Activated CD4-positive, alpha-beta T cell treated with anti-CD3 and anti-CD28 coated beads for 36 hours (primary cell): ENCODE measurements at regions of chr22 and their contacts with region 1.

Region 1: GRCh38 chr22:31211862-31212730 is at the start of gene LIMK2:
- DNase-seq: peak; percentile 99
- ATAC-seq: peak; percentile 97
- H3K4me3 Mint-ChIP-seq: peak within 1 kb of the TSS; percentile 85
- H3K27ac Mint-ChIP-seq: peak within 1 kb of the TSS; percentile 92
- H3K4me1 Mint-ChIP-seq: peaks cover 45% of the 10 kb centered on the region
- H3K27me3 Mint-ChIP-seq: no peaks in the 10 kb centered on the region
- total RNA-seq, gene LIMK2: 31.8 to 34.4 TPM

Region 2: DNA sequence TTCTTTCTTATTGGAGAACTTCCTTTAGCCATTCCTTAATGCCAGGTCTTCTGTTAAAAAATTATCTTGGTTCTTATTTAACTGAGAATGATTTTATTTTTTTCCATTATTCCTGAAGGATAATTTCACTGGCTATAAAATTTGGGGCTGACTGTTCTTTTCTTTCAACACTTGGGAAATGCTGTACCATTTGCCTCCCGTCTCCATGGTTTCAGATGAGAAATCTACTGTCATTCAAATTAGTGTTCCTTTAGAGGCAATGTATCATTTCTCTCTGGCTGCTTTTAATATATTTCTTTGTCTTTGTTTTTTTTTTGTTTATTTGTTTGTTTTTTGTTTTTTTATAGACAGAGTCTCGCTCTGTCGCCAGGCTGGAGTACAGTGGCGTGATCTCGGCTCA is 182.8 kb before region 1 on chr22:
- CTCF ChIA-PET with region 1: no interaction called
- POLR2A ChIA-PET with region 1: no interaction called
- intact Hi-C with region 1: no loop called
- DNase-seq: no peak
- ATAC-seq: no peak
- H3K4me3 Mint-ChIP-seq: no peak overlapping the region
- H3K27ac Mint-ChIP-seq: no peak overlapping the region
- H3K4me1 Mint-ChIP-seq: no peaks in the 10 kb centered on the region
- H3K27me3 Mint-ChIP-seq: no peaks in the 10 kb centered on the region

Region 3: DNA sequence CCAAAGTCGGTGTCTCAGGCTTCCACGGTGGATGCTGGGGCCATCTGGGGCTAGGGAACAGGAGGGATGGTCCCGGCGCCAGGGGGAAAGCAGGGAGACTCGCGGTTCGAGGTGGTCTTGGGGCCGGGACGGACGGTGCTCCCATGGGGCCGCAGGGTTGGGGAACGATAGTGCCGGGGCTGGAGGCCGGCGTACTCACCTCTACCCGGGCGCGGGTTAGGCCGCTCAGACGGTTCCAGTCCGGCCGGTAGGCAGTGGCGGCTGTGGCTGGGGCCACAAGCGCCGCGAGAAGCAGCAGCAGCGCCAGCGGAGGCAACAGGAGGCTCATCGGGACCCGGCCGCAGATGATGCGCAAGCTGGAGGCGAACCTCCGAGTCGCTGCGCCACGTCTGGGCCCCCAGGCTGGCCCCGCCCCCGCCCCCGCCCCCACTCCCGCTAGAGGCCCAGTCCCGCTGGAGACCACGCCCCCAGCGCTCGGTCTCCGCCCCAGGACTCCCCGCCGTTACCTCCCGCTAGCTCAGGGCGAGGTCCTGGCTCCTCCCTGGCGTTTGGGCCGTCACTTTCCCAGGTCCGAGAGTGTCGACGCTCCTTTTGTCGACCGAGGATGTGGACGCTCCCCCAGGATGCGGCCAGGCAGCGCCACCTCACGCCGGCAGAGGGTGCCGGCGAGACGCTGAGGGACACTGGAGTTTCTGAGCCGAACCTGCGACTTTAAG is 104.8 kb before region 1 on chr22 and contains the start of gene SELENOM:
- CTCF ChIA-PET with region 1: interaction called, 5 read pairs
- POLR2A ChIA-PET with region 1: no interaction called
- intact Hi-C with region 1: loop called (anchors 1 to 5 kb)
- DNase-seq: peak; percentile 94
- ATAC-seq: peak; percentile 96
- H3K4me3 Mint-ChIP-seq: peak within 1 kb of the TSS; percentile 74
- H3K27ac Mint-ChIP-seq: peak within 1 kb of the TSS; percentile 60
- H3K4me1 Mint-ChIP-seq: peaks cover 19% of the 10 kb centered on the region
- H3K27me3 Mint-ChIP-seq: no peaks in the 10 kb centered on the region
- total RNA-seq, gene SELENOM: 8.8 to 12.2 TPM

Region 4: GRCh38 chr22:31170971-31171370 is 41.1 kb before region 1 on chr22:
- CTCF ChIA-PET with region 1: no interaction called
- POLR2A ChIA-PET with region 1: no interaction called
- intact Hi-C with region 1: no loop called
- DNase-seq: no peak
- ATAC-seq: no peak
- H3K4me3 Mint-ChIP-seq: no peak overlapping the region
- H3K27ac Mint-ChIP-seq: no peak overlapping the region
- H3K4me1 Mint-ChIP-seq: peaks cover 47% of the 10 kb centered on the region
- H3K27me3 Mint-ChIP-seq: no peaks in the 10 kb centered on the region

Region 5: GRCh38 chr22:31230871-31231621 is 18.9 kb after region 1 on chr22:
- CTCF ChIA-PET with region 1: interaction called, 18 read pairs
- POLR2A ChIA-PET with region 1: interaction called, 3 read pairs
- intact Hi-C with region 1: no loop called
- DNase-seq: peak; percentile 57
- ATAC-seq: peak; percentile 67
- H3K4me3 Mint-ChIP-seq: no peak overlapping the region
- H3K27ac Mint-ChIP-seq: peak overlapping the region; percentile 10
- H3K4me1 Mint-ChIP-seq: peaks cover 32% of the 10 kb centered on the region
- H3K27me3 Mint-ChIP-seq: no peaks in the 10 kb centered on the region

Region 6: GRCh38 chr22:31313366-31314147 is 101.5 kb after region 1 on chr22:
- CTCF ChIA-PET with region 1: interaction called, 39 read pairs
- POLR2A ChIA-PET with region 1: no interaction called
- intact Hi-C with region 1: loop called (anchors 1 kb)
- DNase-seq: peak; percentile 82
- ATAC-seq: peak; percentile 88
- H3K4me3 Mint-ChIP-seq: no peak overlapping the region
- H3K27ac Mint-ChIP-seq: no peak overlapping the region
- H3K4me1 Mint-ChIP-seq: peaks cover 22% of the 10 kb centered on the region
- H3K27me3 Mint-ChIP-seq: no peaks in the 10 kb centered on the region

Region 7: GRCh38 chr22:31496007-31496734 is 284.1 kb after region 1 on chr22 and contains the start of gene SFI1:
- CTCF ChIA-PET with region 1: no interaction called
- POLR2A ChIA-PET with region 1: no interaction called
- intact Hi-C with region 1: loop called in 1 of 2 experiments (anchors 5 kb)
- DNase-seq: peak; percentile 97
- ATAC-seq: peak; percentile 87
- H3K4me3 Mint-ChIP-seq: peak within 1 kb of the TSS; percentile 85
- H3K27ac Mint-ChIP-seq: peak within 1 kb of the TSS; percentile 93
- H3K4me1 Mint-ChIP-seq: peaks cover 55% of the 10 kb centered on the region
- H3K27me3 Mint-ChIP-seq: no peaks in the 10 kb centered on the region
- total RNA-seq, gene SFI1: 221 to 234 TPM

Region 8: DNA sequence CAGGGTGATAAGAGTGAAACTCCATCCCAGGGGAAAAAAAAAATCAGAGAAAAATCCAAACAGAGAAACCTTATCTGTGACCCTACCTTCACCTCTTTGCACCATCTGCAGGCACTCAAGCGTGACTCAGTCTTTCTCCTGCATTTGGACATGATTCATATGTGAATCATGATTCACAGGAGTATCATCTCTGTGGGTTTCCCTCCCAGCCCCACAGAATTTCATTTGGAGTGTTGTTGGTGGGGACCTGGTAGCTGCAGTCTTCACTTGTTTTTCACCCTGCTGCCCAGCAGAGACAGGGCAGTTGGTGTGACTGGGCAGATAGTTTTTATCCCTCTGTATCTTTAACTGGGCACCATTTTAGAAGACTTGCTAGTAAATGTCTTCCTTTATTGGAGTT is 617.4 kb after region 1 on chr22:
- CTCF ChIA-PET with region 1: no interaction called
- POLR2A ChIA-PET with region 1: no interaction called
- intact Hi-C with region 1: no loop called
- DNase-seq: peak; percentile 76
- ATAC-seq: peak; percentile 98
- H3K4me3 Mint-ChIP-seq: peak overlapping the region; percentile 4
- H3K27ac Mint-ChIP-seq: peak overlapping the region; percentile 88
- H3K4me1 Mint-ChIP-seq: peaks cover 31% of the 10 kb centered on the region
- H3K27me3 Mint-ChIP-seq: no peaks in the 10 kb centered on the region

Region 9: DNA sequence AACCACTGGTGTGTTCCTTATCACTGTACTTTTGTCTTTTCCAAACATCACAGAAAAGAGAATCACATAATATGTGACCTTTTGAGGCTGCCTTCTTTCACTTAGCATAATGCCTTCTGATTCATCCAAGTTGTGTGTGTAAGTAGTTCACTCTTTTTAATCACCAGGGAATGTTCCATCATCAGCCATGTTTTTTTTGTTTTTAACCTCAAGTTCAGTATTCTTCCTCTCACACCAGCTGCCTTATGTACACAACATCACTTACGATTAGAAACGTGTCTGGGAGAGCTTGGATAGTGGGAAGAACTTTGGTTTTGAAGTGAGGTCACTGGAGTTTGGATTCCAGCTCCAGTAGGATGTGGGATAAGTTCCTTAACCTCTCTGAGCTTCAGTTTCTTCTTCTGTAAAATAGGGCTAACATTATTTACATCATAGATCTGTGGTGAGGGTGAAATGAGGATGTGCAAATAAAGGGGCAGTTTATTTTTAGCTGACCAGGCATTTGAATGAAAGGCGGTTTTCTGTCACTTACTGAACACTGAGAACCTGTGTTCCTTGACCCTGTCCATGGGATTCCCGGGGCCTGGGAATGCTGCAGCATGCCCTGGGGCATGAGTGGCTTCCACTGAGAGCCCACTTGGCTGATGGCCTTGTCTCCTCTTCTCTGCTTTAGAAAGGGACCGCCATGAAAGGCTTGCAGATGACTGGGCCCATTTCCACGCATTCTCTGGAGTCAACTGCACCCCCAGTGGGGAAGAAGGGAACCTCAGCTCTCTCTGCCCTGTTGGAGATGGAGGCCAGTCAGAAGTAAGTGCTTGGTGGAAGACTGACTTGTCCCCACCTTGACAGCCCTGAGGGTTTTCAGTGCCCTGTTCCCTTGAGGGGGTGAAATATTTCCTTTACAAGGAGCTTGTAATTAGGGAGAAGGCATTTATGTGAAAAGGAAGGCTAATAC is 634.3 kb after region 1 on chr22:
- CTCF ChIA-PET with region 1: no interaction called
- POLR2A ChIA-PET with region 1: no interaction called
- intact Hi-C with region 1: no loop called
- DNase-seq: peak; percentile 32
- ATAC-seq: peak; percentile 51
- H3K4me3 Mint-ChIP-seq: no peak overlapping the region
- H3K27ac Mint-ChIP-seq: peak overlapping the region; percentile 2
- H3K4me1 Mint-ChIP-seq: peaks cover 9% of the 10 kb centered on the region
- H3K27me3 Mint-ChIP-seq: no peaks in the 10 kb centered on the region